ENCODE measurements at regions of chr10 and their contacts with region 1.

Region 1: GRCh38 chr10:24215196-24215595 is 6.3 kb downstream of the KIAA1217 start:
- DNase-seq: peak in 4 of 5 donors; percentile 32 to 58 (median 34)
- ATAC-seq: peak; percentile 40 to 78 (median 74)
- H3K4me3 ChIP-seq: peak overlapping the region in 5 of 12 donors; percentile 11 to 29 (median 16)
- H3K27ac ChIP-seq: peak overlapping the region; percentile 47 to 85 (median 74)
- H3K4me1 ChIP-seq: peaks cover 3 to 80% (median 51%) of the 10 kb centered on the region in 12 donors
- H3K27me3 ChIP-seq: no peaks in the 10 kb centered on the region
- CTCF ChIP-seq: no peak
- POLR2A ChIP-seq: no peak

Region 2: DNA sequence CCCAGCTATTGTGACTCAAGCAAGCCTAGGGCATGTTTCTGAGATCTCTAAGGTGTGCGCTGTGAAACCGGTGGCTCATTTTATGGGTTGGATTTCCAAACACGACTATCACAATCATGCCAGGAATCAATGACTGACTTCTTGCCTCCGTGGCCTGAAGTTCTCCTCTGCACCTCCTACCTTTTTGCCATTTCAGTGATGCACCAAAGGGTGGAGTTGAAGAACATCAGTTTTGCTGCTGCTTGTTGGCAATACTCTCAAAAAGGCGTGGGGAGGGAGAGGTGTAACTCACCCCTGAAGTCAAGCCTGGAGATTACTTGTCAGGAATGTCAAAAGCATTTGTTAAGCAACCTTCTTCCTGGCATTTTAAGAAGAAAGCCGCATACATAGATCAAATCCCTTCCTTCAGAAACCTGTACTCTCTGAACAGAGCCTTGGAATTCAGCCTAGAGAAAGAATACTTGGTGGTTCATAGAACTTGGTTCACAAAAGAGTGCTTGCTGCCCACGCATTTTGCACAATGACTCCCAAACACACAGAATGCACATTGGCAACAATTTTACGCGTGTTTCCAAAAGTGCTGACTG is 34.7 kb after region 1 on chr10:
- intact Hi-C with region 1: loop called in 2 of 10 experiments (anchors 5 kb)
- DNase-seq: no peak
- ATAC-seq: no peak
- H3K4me3 ChIP-seq: no peak overlapping the region
- H3K27ac ChIP-seq: no peak overlapping the region
- H3K4me1 ChIP-seq: peaks cover 0 to 44% (median 13%) of the 10 kb centered on the region in 12 donors
- H3K27me3 ChIP-seq: no peaks in the 10 kb centered on the region
- CTCF ChIP-seq: no peak
- POLR2A ChIP-seq: no peak

Region 3: GRCh38 chr10:24255881-24256311 is 40.7 kb after region 1 on chr10:
- intact Hi-C with region 1: loop called in 2 of 10 experiments (anchors 5 kb)
- DNase-seq: peak in 4 of 5 donors; percentile 34 to 70 (median 56)
- ATAC-seq: peak; percentile 79 to 88 (median 84)
- H3K4me3 ChIP-seq: no peak overlapping the region
- H3K27ac ChIP-seq: peak overlapping the region in 11 of 12 donors; percentile 3 to 64 (median 52)
- H3K4me1 ChIP-seq: peaks cover 2 to 68% (median 32%) of the 10 kb centered on the region in 12 donors
- H3K27me3 ChIP-seq: no peaks in the 10 kb centered on the region
- CTCF ChIP-seq: no peak
- POLR2A ChIP-seq: no peak

Region 4: GRCh38 chr10:24331457-24331856 is 116.3 kb after region 1 on chr10:
- intact Hi-C with region 1: no loop called
- DNase-seq: peak in 4 of 5 donors; percentile 59 to 63 (median 62)
- ATAC-seq: peak; percentile 46 to 82 (median 66)
- H3K4me3 ChIP-seq: no peak overlapping the region
- H3K27ac ChIP-seq: peak overlapping the region in 7 of 12 donors; percentile 11 to 44 (median 31)
- H3K4me1 ChIP-seq: peaks cover 0 to 31% (median 13%) of the 10 kb centered on the region in 12 donors
- H3K27me3 ChIP-seq: no peaks in the 10 kb centered on the region
- CTCF ChIP-seq: no peak
- POLR2A ChIP-seq: no peak

Region 5: DNA sequence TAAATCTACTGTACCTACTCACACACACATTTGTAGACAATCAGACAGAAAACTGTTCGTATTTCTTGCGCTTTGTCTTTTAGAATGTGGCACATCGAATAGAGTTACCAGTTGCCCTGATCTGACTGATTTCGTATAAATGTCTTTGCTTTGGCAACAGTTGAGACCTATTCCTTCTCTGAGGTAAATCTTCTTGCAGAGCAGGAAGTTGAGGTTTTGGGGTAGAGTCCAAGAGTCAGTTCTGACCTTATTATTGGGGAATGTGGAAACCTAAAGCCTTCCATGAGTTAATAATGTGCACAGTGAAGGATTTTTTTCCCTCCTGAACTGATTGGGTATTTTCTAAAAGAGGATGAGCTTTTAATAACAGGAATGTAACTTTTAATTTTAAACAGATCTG is 129.1 kb after region 1 on chr10:
- intact Hi-C with region 1: loop called in 2 of 10 experiments (anchors 5 to 10 kb)
- DNase-seq: no peak
- ATAC-seq: peak in 3 of 4 donors; percentile 13 to 41 (median 35)
- H3K4me3 ChIP-seq: peak overlapping the region in 1 of 12 donors; percentile 5
- H3K27ac ChIP-seq: peak overlapping the region in 6 of 12 donors; percentile 10 to 49 (median 43)
- H3K4me1 ChIP-seq: peaks cover 4 to 51% (median 32%) of the 10 kb centered on the region in 12 donors
- H3K27me3 ChIP-seq: no peaks in the 10 kb centered on the region
- CTCF ChIP-seq: no peak
- POLR2A ChIP-seq: no peak

Measured in heart left ventricle (tissue), 16 donors.